Endothelial cell of umbilical vein (primary cell): ENCODE measurements at regions of chr16 and their contacts with region 1.

Region 1: DNA sequence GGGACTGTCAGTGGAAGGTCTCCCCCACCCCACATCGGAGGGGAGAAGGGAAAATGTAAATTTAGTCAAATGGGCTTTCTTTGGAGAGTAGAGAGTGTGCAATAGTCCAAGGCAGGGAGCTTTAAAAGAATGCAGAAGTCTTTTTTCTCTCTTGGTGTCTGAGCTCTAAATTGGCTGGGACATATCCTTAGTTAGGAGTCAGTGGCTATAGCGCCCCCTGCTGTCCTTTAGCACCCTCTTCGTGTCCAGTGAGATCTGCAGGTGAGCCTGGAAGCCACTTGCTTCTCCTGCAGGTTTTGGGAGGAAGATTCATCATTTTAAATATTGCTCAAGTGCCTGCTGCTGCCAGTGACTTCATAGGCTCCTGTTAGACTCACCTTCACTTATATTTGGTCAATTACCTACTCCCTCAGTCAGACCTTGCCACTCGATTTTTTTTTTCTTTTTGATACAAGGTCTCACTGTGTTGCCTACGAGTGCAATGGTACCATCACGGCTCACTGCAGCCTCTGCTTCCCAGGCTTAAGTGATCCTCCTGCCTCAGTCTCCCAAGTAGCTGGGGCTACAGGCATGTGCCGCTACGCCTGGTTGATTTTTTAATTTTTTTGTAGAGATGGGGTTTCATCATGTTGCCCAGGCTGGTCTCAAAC is 174.8 kb downstream of the PRKCB start:
- DNase-seq: peak; percentile 57
- H3K4me3 ChIP-seq: no peak overlapping the region
- H3K27ac ChIP-seq: no peak overlapping the region
- H3K4me1 ChIP-seq: no peaks in the 10 kb centered on the region
- H3K27me3 ChIP-seq: no peaks in the 10 kb centered on the region
- CTCF ChIP-seq: peak; percentile 68 to 74
- POLR2A ChIP-seq: no peak

Region 2: GRCh38 chr16:23728112-23728477 is 282.5 kb before region 1 on chr16:
- CTCF ChIA-PET with region 1: interaction called, 50 read pairs
- POLR2A ChIA-PET with region 1: no interaction called
- dilution Hi-C with region 1: no loop called
- intact Hi-C with region 1: no loop called
- DNase-seq: no peak
- H3K4me3 ChIP-seq: no peak overlapping the region
- H3K27ac ChIP-seq: no peak overlapping the region
- H3K4me1 ChIP-seq: no peaks in the 10 kb centered on the region
- H3K27me3 ChIP-seq: no peaks in the 10 kb centered on the region
- CTCF ChIP-seq: no peak
- POLR2A ChIP-seq: no peak

Region 3: GRCh38 chr16:23742766-23743165 is 267.8 kb before region 1 on chr16:
- CTCF ChIA-PET with region 1: interaction called, 12 read pairs
- POLR2A ChIA-PET with region 1: no interaction called
- dilution Hi-C with region 1: no loop called
- intact Hi-C with region 1: no loop called
- DNase-seq: no peak
- H3K4me3 ChIP-seq: no peak overlapping the region
- H3K27ac ChIP-seq: no peak overlapping the region
- H3K4me1 ChIP-seq: no peaks in the 10 kb centered on the region
- H3K27me3 ChIP-seq: no peaks in the 10 kb centered on the region
- CTCF ChIP-seq: no peak
- POLR2A ChIP-seq: no peak

Region 4: DNA sequence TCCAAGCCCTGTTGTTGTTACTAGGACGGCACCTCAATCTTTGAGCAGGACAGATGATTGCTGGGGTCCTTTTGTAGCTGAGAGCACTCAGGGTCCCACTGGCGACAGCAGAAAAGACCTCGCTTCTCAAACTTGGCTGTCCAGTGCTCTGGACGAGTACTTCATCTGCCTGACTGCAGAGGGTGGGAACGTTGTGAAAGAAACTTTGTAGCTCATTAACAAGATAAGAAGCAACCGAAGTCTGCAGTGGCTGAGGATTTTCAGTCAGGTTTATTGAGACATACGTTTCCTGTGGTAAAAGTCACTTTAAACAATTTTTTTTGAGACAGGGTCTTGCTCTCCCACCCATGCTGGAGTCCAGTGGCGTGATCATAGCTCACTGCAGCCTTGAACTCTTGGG is 16.9 kb after region 1 on chr16:
- CTCF ChIA-PET with region 1: interaction called, 18 read pairs
- POLR2A ChIA-PET with region 1: no interaction called
- dilution Hi-C with region 1: no loop called
- intact Hi-C with region 1: no loop called
- DNase-seq: no peak
- H3K4me3 ChIP-seq: no peak overlapping the region
- H3K27ac ChIP-seq: no peak overlapping the region
- H3K4me1 ChIP-seq: no peaks in the 10 kb centered on the region
- H3K27me3 ChIP-seq: no peaks in the 10 kb centered on the region
- CTCF ChIP-seq: no peak
- POLR2A ChIP-seq: no peak

Region 5: DNA sequence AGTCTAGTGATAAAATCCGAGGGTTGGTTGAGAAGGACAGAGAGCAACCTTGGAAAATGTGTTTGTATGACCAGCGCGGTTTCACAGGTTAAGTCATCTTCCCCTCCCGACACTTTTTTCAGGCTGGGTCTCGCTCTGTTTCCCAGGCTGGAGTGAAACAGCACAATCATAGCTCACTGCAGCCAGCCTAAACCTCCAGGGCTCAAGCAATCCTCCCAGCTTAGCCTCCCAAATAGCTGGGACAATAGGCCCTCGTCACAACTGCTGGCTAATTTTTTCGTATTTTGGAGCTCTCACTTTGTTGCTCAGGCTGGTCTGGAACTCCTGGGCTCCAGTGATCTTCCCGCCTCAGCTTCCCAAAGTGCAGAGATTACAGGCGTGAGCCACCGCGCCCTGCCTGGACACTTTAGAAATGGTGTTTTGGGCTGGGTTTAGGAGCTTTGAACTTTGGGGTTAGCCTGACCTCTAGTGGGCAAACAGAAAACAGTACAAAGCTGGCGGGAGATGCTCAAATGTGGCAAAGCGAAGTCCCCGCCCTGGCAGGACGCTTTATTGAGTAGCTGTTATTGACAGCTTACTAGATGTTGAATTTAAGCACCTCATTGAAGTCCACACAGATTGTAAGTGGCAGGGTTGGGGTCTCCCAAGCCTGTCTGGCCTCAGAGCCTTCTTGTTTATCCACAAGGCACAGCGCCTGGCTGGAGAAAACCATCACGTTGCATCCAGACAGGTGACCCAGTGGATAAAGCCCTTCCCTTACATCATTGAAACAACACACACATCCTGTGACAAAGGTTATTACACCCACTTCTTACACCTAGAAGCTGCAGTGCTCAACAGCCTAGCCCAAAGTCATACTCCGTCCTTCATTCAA is 494.1 kb after region 1 on chr16:
- CTCF ChIA-PET with region 1: interaction called, 16 read pairs
- POLR2A ChIA-PET with region 1: no interaction called
- dilution Hi-C with region 1: no loop called
- intact Hi-C with region 1: no loop called
- DNase-seq: peak; percentile 67
- H3K4me3 ChIP-seq: no peak overlapping the region
- H3K27ac ChIP-seq: no peak overlapping the region
- H3K4me1 ChIP-seq: no peaks in the 10 kb centered on the region
- H3K27me3 ChIP-seq: peaks cover 0 to 3% of the 10 kb centered on the region in 2 experiments
- CTCF ChIP-seq: peak; percentile 70 to 73
- POLR2A ChIP-seq: no peak